ENCODE measurements at regions of chr2 and their contacts with region 1.

Region 1: DNA sequence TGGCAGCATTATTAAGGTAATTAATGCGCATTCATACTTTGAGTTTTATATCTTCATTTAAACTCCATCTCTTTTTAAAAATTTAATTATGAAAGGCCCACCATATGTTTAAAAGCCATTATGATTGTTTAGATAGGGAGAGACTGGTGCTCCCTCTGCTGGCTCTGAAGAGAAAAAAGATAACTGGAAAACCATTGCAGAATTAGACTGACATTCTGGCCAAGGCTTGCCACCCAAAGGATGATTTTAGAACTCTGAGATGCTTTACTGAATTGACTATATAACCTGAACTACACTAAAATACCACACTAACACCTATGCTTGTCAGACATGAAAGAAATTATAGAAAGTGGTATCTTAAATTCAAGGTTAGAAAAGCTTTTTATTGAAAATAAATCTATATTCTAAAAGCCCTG is 127.6 kb upstream of the SPOPL start:
- DNase-seq: peak in 2 of 7 donors; percentile 15 to 27
- H3K4me3 ChIP-seq: no peak overlapping the region
- H3K27ac ChIP-seq: no peak overlapping the region
- H3K4me1 ChIP-seq: no peaks in the 10 kb centered on the region
- H3K27me3 ChIP-seq: no peaks in the 10 kb centered on the region
- CTCF ChIP-seq: peak; percentile 33 to 79 (median 62)
- POLR2A ChIP-seq: no peak

Region 2: DNA sequence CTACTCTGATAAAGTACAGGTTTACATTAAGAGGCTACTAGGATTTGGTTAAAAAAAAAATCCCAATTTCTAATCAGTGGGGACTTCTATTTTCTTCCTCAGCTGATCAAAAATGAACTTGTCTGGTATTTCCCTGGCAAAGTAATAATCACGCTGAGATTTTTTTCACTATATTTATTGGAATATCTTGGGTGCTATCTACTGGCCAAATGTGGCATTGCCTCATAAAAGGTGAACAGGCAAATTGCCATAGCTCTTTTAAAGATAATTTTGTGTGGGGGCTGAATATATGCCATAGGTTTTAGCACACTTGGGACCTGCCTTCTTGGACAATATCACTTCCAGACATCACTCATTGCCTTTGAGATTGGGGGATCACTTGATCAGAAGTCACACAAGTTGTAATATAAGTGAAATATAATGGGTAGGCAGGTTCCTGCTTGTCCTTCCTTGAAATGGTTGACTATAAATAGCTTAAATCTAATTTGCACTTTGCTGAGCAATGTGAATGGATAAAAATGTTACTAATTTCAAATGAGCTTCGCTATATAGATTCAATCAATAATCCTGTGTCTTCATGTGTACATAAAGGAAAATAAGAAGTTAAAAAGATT is 413.2 kb after region 1 on chr2:
- intact Hi-C with region 1: loop called in 1 of 2 experiments (anchors 10 kb)
- DNase-seq: peak in 3 of 7 donors; percentile 35 to 56 (median 41)
- H3K4me3 ChIP-seq: no peak overlapping the region
- H3K27ac ChIP-seq: no peak overlapping the region
- H3K4me1 ChIP-seq: no peaks in the 10 kb centered on the region
- H3K27me3 ChIP-seq: peaks cover 6% of the 10 kb centered on the region
- CTCF ChIP-seq: peak; percentile 49 to 81 (median 78)
- POLR2A ChIP-seq: no peak

Measured in adrenal gland (tissue), 19 donors.